ENCODE measurements at regions of chr20 and their contacts with region 1.

Region 1: DNA sequence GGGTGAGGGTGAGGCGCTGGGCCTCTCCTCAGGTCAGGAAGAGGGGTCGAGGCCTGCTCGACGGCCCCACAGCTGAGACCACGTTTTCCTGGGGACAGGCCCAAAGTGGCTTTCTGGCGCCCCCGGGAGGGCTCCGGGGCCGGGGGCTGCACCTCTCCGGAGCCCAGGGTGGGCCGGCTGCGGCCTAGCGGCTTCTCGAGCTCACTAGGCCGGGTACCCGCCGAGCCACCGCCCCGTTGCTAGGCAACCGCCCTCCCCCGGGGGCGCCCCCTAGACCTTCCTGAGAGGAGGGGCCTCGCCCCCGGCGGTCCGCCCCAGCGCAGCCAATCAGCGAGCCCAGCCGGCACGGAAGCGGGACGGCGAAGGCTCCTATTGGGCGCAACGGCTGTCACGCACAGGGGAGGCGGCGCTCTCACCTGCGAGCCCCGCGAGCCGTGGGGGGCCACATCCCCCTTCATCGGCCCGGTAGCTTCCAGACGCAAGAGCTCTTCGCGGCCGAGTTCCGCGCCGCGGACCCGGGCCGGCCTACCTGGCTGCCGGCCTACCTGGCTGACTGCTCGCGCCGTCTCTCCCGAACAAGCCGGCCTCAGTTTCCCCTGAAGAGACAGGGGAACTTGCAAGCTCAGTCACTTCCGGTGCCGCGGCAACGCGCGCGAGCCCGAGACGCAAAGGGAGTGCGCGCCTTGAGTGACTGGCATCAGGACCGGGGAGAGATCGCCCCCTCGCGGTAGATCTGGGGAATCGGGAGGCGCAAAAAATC is 831 bp upstream of the BCL2L1 start:
- DNase-seq: peak; percentile 97
- ATAC-seq: peak; percentile 64
- H3K4me3 ChIP-seq: peak overlapping the region; percentile 95
- H3K27ac ChIP-seq: peak overlapping the region; percentile 93
- H3K4me1 ChIP-seq: peaks cover 25% of the 10 kb centered on the region
- H3K27me3 ChIP-seq: no peaks in the 10 kb centered on the region
- CTCF ChIP-seq: peak; percentile 93

Region 2: DNA sequence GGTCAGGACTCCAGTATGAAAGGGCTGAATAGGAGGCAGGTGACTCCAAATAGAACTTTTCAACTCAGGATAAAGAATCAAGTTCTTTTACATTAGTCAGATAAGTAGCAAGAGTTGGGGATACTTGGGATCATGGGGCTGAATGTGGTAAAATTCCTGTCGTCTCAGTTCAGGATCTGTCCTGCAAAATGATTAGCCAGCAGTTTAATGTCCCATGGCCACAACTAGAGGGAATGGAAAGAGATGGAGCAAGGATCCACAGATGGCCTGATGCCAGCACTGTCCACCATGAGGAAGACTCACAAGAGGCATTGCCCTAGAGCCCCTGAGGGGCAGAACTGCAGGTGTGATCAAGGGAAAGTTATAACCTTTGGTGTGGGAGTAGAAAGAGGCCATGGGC is 319.6 kb before region 1 on chr20:
- CTCF ChIA-PET with region 1: no interaction called
- POLR2A ChIA-PET with region 1: no interaction called
- intact Hi-C with region 1: no loop called
- DNase-seq: no peak
- ATAC-seq: no peak
- H3K4me3 ChIP-seq: no peak overlapping the region
- H3K27ac ChIP-seq: no peak overlapping the region
- H3K4me1 ChIP-seq: no peaks in the 10 kb centered on the region
- H3K27me3 ChIP-seq: peaks cover 14% of the 10 kb centered on the region; the same call in 1 of the 2 replicates
- CTCF ChIP-seq: no peak

Region 3: GRCh38 chr20:31605031-31605901 is 118.2 kb before region 1 on chr20 and contains the start of gene ID1:
- CTCF ChIA-PET with region 1: interaction called, 3 read pairs
- POLR2A ChIA-PET with region 1: interaction called, 17 read pairs
- intact Hi-C with region 1: no loop called
- DNase-seq: peak; percentile 97
- ATAC-seq: peak; percentile 49
- H3K4me3 ChIP-seq: peak within 1 kb of the TSS; percentile 97
- H3K27ac ChIP-seq: peak within 1 kb of the TSS; percentile 69
- H3K4me1 ChIP-seq: peaks cover 57% of the 10 kb centered on the region
- H3K27me3 ChIP-seq: no peaks in the 10 kb centered on the region
- CTCF ChIP-seq: no peak
- total RNA-seq, gene ID1: 774 and 872 TPM in 2 replicates

Region 4: GRCh38 chr20:31661625-31662371 is 61.7 kb before region 1 on chr20:
- CTCF ChIA-PET with region 1: interaction called, 134 read pairs
- POLR2A ChIA-PET with region 1: interaction called, 16 read pairs
- intact Hi-C with region 1: loop called (anchors 1 kb)
- DNase-seq: peak; percentile 68
- ATAC-seq: peak; percentile 52
- H3K4me3 ChIP-seq: peak overlapping the region; percentile 40; the same call in 1 of the 2 replicates
- H3K27ac ChIP-seq: peak overlapping the region; percentile 18
- H3K4me1 ChIP-seq: peaks cover 38% of the 10 kb centered on the region
- H3K27me3 ChIP-seq: no peaks in the 10 kb centered on the region
- CTCF ChIP-seq: peak; percentile 58

Region 5: DNA sequence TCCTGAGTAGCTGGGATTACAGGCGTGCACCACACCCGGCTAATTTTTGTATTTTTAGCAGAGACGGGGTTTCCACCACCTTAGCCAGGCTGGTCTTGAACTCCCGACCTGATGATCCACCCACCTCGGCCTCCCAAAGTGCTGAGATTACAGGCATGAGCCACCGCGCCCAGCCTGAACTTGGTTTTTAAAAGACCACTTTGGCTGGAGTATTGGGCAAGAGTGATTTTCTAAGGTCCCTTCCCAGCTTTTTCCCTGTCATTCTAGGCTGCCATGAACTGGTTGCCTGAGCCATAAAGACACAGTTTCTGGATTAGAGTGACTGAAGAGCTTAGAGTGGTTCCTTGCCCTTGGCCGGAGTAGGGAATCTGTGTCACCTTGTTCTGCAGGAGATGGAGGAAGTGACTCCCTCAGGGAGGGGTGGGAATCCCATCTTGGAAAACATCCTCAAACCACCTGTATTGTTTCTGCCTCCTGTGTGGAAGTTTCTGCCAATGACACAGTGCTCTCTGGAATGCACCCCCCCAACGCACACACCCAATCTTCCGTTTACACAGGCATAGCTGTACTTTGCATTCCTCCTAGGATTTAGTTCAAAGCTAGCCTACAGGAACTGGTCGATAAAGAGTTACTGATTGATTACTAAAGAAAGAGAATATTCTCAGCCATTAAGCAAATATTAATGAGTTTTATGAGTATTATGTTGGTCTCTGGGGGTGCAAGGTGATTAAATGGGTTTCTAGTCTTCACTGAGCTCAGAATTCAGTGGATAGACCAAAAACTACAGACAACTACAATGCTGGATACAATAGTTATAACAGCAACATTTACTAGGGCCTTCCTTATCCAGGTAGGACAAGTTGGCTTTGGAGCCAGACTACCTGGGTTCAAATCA is 19.0 kb before region 1 on chr20:
- CTCF ChIA-PET with region 1: interaction called, 16 read pairs
- POLR2A ChIA-PET with region 1: interaction called, 33 read pairs
- intact Hi-C with region 1: loop called (anchors 1 kb)
- DNase-seq: peak; percentile 98
- ATAC-seq: peak; percentile 87
- H3K4me3 ChIP-seq: peak overlapping the region; percentile 5; the same call in 1 of the 2 replicates
- H3K27ac ChIP-seq: peak overlapping the region; percentile 96
- H3K4me1 ChIP-seq: peaks cover 73% of the 10 kb centered on the region
- H3K27me3 ChIP-seq: no peaks in the 10 kb centered on the region
- CTCF ChIP-seq: no peak

Region 6: GRCh38 chr20:31738729-31739561 is 15.4 kb after region 1 on chr20 and contains the start of gene TPX2:
- CTCF ChIA-PET with region 1: interaction called, 11 read pairs
- POLR2A ChIA-PET with region 1: interaction called, 4 read pairs
- intact Hi-C with region 1: no loop called
- DNase-seq: peak; percentile 98
- ATAC-seq: peak; percentile 96
- H3K4me3 ChIP-seq: peak within 1 kb of the TSS; percentile 84
- H3K27ac ChIP-seq: peak within 1 kb of the TSS; percentile 75
- H3K4me1 ChIP-seq: peaks cover 16% of the 10 kb centered on the region; the same call in 1 of the 2 replicates
- H3K27me3 ChIP-seq: no peaks in the 10 kb centered on the region
- CTCF ChIP-seq: peak; percentile 26; the same call in 1 of the 2 replicates
- total RNA-seq, gene TPX2: 128 and 151 TPM in 2 replicates

Region 7: DNA sequence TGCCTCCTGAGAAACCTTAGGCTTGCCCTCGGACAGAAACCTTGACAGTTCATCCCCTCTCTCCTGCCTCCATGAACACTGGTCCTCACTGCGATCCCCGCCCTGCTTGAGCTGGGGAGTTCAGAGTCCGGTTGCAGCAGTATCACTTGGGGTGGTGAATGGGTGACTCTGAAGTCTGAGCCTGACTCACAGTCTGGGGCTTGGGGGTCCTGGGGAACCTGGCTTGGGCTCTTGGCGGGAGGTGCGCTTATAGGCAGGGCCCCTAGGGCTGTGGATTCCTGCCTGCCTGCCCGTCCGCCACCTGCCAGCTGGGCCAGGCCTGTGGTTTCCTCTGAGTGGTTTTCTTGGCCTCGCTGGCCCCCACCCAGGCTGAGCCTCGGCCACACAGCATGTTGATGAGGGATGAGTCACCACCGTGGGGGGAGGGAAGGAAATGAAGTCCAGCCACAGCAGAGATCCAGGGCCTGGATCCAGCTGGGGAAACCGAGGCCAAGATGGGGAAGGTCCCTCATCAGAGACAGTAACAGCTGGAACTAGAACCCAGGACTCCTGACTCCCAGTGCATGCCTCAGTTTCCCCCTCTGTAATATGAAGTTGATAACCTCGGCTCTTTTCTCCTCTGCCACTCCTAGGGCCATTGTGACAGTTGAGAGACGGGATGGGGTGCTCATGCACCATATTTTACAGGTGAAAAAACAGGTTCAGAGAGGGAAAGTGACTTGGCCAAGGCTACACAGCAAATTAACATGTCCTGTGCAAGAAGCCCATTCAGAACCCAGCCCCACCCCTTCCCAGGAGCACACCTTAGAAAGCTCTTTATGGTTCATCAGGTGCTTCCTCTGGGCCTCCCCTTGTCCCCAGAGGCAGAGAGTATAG is 112.7 kb after region 1 on chr20:
- CTCF ChIA-PET with region 1: no interaction called
- POLR2A ChIA-PET with region 1: no interaction called
- intact Hi-C with region 1: loop called (anchors 5 kb)
- DNase-seq: peak; percentile 94
- ATAC-seq: peak; percentile 94
- H3K4me3 ChIP-seq: no peak overlapping the region
- H3K27ac ChIP-seq: no peak overlapping the region
- H3K4me1 ChIP-seq: peaks cover 17% of the 10 kb centered on the region
- H3K27me3 ChIP-seq: no peaks in the 10 kb centered on the region
- CTCF ChIP-seq: no peak

Region 8: DNA sequence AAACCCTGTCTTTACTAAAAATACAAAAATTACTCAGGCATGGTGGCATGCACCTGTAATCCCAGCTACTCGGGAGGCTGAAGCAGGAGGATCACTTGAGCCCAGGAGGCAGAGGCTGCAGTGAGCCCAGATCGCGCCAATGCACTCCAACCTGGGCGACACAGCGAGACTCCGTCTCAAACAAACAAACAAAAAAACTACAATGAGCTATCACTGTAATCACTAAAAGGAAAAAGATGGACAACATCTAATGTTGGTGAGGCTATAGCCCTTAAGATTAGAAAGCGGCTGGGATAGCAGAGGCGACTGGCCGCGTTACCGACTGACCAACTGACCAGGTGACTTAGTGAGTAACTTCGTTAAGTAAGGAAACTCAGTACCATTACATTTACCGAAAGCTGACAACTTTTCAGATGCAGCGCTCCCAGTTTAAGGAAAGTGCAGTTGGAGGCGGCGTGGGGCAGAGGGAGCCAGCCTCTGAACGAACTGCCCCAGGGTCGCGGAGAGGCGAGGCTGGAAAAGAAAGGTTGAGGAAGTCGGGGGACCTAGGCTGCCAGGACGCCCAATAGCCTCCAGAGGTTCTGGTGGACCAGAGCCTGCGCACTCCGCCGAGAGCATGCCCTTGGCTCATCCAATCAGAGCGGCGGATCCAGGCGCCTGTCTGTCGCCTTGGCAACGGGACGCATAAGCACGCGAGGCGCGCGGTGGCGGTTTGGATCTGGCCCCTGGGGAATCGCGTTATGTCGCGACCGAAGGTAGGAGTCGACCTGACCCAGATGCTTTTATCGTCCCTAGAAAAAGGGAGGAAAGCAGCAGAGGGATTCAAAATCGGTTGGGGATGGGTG is 155.9 kb after region 1 on chr20:
- CTCF ChIA-PET with region 1: no interaction called
- POLR2A ChIA-PET with region 1: no interaction called
- intact Hi-C with region 1: no loop called
- DNase-seq: peak; percentile 94
- ATAC-seq: peak; percentile 99
- H3K4me3 ChIP-seq: peak overlapping the region; percentile 79
- H3K27ac ChIP-seq: no peak overlapping the region
- H3K4me1 ChIP-seq: 0 out of 2 replicates have a peak, but pooled peaks cover 9% of the 10 kb centered on the region
- H3K27me3 ChIP-seq: no peaks in the 10 kb centered on the region
- CTCF ChIP-seq: no peak

Region 9: GRCh38 chr20:32052090-32052777 is 328.7 kb after region 1 on chr20 and contains the start of gene HCK:
- CTCF ChIA-PET with region 1: no interaction called
- POLR2A ChIA-PET with region 1: no interaction called
- intact Hi-C with region 1: no loop called
- DNase-seq: no peak
- ATAC-seq: no peak
- H3K4me3 ChIP-seq: no peak within 1 kb of the TSS
- H3K27ac ChIP-seq: no peak within 1 kb of the TSS
- H3K4me1 ChIP-seq: no peaks in the 10 kb centered on the region
- H3K27me3 ChIP-seq: peaks cover 70% of the 10 kb centered on the region
- CTCF ChIP-seq: no peak
- total RNA-seq, gene HCK: not detected in 2 replicates

Region 10: DNA sequence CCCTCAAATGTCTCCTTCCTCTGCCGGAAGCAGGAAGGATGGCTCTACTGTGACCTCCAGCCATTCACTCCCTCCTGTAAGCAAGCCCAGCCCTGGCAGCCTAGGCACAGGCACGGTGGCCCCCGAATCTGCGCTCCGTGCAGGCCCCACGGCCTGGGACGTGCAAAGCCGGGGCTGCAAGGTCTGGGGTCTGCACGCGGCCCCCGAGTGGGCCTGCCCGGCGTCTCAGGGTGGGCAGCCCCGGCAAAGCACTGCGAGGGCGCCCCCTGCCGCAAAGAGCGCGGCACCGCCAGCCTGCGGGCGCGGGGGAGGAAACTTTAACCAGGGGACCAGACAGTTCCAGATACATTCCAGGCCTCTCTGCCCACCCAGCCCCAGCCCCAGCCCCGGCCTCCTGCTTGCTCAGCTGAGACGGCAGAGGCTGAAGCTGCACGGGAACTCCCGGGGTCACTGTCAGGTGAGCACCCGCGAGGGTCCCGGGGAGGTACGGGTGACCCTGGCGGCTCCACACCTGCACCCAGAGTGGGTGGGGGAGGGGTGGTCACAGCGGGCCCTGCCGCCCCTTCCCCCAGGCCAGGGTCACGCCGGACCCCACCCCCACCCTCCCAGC is 733.5 kb after region 1 on chr20:
- CTCF ChIA-PET with region 1: no interaction called
- POLR2A ChIA-PET with region 1: no interaction called
- intact Hi-C with region 1: no loop called
- DNase-seq: peak; percentile 55
- ATAC-seq: peak; percentile 64
- H3K4me3 ChIP-seq: peak overlapping the region; percentile 69
- H3K27ac ChIP-seq: no peak overlapping the region
- H3K4me1 ChIP-seq: peaks cover 3% of the 10 kb centered on the region; the same call in 1 of the 2 replicates
- H3K27me3 ChIP-seq: no peaks in the 10 kb centered on the region
- CTCF ChIP-seq: peak; percentile 86